OCI-LY7 (cell line): ENCODE measurements at regions of chr12 and their contacts with region 1.

Region 1: GRCh38 chr12:121550974-121551634 is 29.7 kb downstream of the KDM2B start:
- DNase-seq: no peak
- H3K4me3 ChIP-seq: no peak overlapping the region
- H3K27ac ChIP-seq: no peak overlapping the region
- H3K4me1 ChIP-seq: no peaks in the 10 kb centered on the region
- CTCF ChIP-seq: no peak

Region 2: GRCh38 chr12:121668750-121669520 is 117.8 kb after region 1 on chr12:
- CTCF ChIA-PET with region 1: no interaction called
- POLR2A ChIA-PET with region 1: interaction called, 4 read pairs
- intact Hi-C with region 1: loop called (anchors 1 kb)
- DNase-seq: peak; percentile 70
- H3K4me3 ChIP-seq: no peak overlapping the region
- H3K27ac ChIP-seq: no peak overlapping the region
- H3K4me1 ChIP-seq: peaks cover 30% of the 10 kb centered on the region
- CTCF ChIP-seq: peak; percentile 86

Region 3: DNA sequence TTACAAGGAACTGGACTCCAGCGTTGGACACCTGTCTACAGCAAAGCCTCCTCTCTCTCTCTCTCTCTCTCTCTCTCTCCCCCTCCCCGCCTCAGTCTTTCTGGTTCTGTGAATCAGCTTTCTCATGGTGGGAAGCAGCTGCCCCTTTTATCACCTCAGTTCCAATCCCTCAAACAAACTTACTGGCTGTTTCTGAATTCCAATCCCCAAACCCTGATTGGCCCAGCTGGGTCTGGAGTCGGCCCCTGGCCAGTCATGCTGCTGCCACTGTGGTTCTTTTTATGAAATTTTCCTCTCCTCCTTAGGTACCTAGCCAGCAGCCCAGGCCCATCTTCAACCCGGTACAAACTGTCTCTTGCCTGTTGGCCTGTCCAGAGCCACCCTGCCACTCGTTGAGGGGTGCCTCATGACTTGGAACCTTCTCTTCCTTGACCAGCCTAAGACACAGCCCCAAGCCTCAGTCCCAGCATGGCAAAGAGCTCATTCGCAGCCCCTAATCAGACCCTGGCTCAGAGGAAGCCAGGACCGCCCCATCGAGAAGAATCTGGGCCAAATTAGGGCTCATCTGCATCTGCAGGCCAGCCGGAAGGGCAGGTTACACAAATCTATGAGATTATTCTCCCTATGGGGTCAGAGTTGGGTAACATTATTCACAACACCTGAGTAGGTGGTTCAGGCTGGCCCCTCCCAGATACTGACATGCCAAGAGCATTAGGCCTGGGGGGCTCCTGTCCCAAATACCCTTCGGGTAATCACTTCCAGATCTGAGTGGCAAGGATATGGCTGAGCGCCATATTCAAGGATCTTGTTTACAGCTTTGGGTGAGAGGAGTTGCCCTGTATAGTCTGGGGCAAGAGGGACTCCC is 127.8 kb after region 1 on chr12:
- CTCF ChIA-PET with region 1: no interaction called
- POLR2A ChIA-PET with region 1: no interaction called
- intact Hi-C with region 1: loop called (anchors 1 kb)
- DNase-seq: no peak
- H3K4me3 ChIP-seq: no peak overlapping the region
- H3K27ac ChIP-seq: no peak overlapping the region
- H3K4me1 ChIP-seq: peaks cover 8% of the 10 kb centered on the region
- CTCF ChIP-seq: no peak

Region 4: DNA sequence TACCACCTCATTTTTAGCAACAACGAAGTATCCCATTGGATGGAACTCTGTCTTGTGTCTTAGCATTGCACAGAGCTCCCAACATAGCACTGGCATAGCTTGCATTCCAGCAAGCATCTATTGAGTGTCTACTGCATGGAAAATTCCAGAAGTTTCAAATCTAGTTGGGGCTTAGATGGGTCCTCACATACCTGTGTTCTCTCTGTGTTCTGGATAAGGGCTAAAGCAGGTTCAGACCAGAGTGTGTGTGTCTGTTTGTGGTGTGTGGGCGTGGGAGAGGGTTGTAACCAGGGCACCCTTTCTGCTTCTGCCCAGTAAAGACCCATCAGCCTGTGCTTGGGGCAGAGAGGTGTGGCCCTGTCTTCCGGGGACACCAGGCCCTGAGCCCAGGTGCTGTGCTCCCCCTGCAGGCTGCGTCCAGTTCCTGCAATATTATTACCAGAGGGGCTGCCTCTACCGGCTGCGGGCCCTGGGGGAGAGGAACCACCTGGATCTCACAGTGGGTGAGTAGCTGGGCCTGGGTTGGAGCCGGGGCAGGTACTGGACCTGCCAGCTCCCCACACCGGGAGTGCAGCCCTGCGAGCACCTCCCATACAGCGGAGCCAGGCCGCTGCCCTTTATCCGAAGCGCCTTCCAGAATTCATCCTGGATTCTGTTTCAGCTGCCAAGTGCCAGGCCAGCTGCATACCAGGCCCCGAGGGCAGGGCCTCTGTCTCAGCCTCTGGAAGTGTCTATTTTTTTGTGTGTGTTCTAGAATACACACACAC is 222.1 kb after region 1 on chr12:
- CTCF ChIA-PET with region 1: no interaction called
- POLR2A ChIA-PET with region 1: no interaction called
- intact Hi-C with region 1: loop called (anchors 1 kb)
- DNase-seq: peak; percentile 89
- H3K4me3 ChIP-seq: no peak overlapping the region
- H3K27ac ChIP-seq: no peak overlapping the region
- H3K4me1 ChIP-seq: peaks cover 29% of the 10 kb centered on the region
- CTCF ChIP-seq: peak; percentile 90